ENCODE measurements at regions of chr3 and their contacts with region 1.

Region 1: DNA sequence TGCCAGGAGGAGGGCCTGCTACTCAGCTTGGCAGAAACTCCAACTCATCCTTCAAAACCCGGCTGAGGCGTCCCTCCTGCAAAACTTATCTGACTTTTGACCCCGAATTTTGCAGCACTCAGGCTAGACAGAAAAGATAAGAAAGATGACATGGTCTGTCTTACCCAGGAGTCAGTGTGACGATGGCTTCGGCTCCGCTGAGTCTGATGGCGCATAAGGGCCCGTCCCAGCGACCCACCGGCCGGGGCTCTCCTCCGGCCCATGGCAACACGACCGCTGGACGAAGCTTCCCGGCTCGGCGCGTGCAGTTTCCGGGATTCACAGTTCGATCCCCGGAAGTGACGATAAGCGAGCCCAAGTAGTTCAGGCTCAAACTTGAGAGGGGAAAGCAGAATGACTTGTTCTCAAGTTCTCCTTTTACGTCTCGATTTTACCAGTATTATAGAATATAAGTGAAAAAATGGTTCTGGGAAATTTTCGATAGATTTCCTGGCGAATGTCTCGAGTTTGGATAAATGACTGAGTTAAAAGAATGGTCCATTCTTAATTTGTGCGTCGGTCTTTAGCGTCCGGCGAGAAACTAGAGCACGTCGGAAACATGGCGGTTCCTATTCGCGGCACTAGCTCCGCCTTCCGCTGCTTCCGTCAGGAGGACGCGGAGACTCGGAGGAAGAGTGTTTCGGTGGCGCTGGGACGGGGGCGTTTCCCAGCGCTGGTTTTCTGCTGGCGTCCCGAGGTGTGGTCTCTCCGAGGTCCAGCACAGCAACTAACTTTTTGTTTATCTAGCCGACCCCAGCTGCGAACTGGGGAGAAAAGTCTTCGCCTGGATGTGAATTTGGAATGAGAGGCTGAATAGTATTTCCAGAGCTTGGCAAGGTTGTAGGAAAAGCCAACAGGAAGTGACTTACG is at the start of gene LSG1:
- DNase-seq: peak; percentile 87 to 90 (median 89)
- H3K4me3 ChIP-seq: peak within 1 kb of the TSS; percentile 85 to 88
- H3K4me3 Mint-ChIP-seq: peak within 1 kb of the TSS; percentile 97 to 100 (median 99)
- H3K27ac ChIP-seq: peak within 1 kb of the TSS; percentile 95
- H3K27ac Mint-ChIP-seq: peak within 1 kb of the TSS; percentile 98 to 99 (median 99)
- H3K4me1 ChIP-seq: peaks cover 32% of the 10 kb centered on the region
- H3K4me1 Mint-ChIP-seq: peaks cover 26 to 52% (median 38%) of the 10 kb centered on the region in 4 donors
- H3K27me3 ChIP-seq: no peaks in the 10 kb centered on the region
- H3K27me3 Mint-ChIP-seq: peaks cover 0 to 4% of the 10 kb centered on the region in 2 donors
- total RNA-seq, gene LSG1: 48.4 to 49.5 TPM

Region 2: GRCh38 chr3:194727435-194728128 is 55.4 kb after region 1 on chr3:
- CTCF ChIA-PET with region 1: no interaction called
- POLR2A ChIA-PET with region 1: no interaction called
- intact Hi-C with region 1: no loop called
- DNase-seq: no peak
- H3K4me3 ChIP-seq: no peak overlapping the region
- H3K4me3 Mint-ChIP-seq: no peak overlapping the region
- H3K27ac ChIP-seq: no peak overlapping the region
- H3K27ac Mint-ChIP-seq: no peak overlapping the region
- H3K4me1 ChIP-seq: no peaks in the 10 kb centered on the region
- H3K4me1 Mint-ChIP-seq: peaks cover 0 to 4% (median under 1%) of the 10 kb centered on the region in 4 donors
- H3K27me3 ChIP-seq: peaks cover 5% of the 10 kb centered on the region
- H3K27me3 Mint-ChIP-seq: peaks cover 11 to 18% of the 10 kb centered on the region in 2 donors

Region 3: GRCh38 chr3:194769020-194769643 is 97.0 kb after region 1 on chr3:
- CTCF ChIA-PET with region 1: no interaction called
- POLR2A ChIA-PET with region 1: interaction called, 12 read pairs
- intact Hi-C with region 1: loop called (anchors 1 kb)
- DNase-seq: peak; percentile 91 to 98 (median 94)
- H3K4me3 ChIP-seq: peak overlapping the region; percentile 33 to 54
- H3K4me3 Mint-ChIP-seq: peak overlapping the region; percentile 86 to 96 (median 87)
- H3K27ac ChIP-seq: peak overlapping the region; percentile 73
- H3K27ac Mint-ChIP-seq: peak overlapping the region; percentile 82 to 98 (median 95)
- H3K4me1 ChIP-seq: peaks cover 15% of the 10 kb centered on the region
- H3K4me1 Mint-ChIP-seq: peaks cover 5 to 30% (median 17%) of the 10 kb centered on the region in 4 donors
- H3K27me3 ChIP-seq: no peaks in the 10 kb centered on the region
- H3K27me3 Mint-ChIP-seq: peaks cover 8 to 11% of the 10 kb centered on the region in 2 donors

Measured in CD4-positive, alpha-beta memory T cell (primary cell).